ENCODE measurements at regions of chr5 and their contacts with region 1.

Region 1: GRCh38 chr5:119411935-119412602 is 40.2 kb upstream of the HSD17B4 start:
- DNase-seq: peak; percentile 78
- ATAC-seq: peak; percentile 89
- H3K4me3 ChIP-seq: peak overlapping the region; percentile 68
- H3K27ac ChIP-seq: peak overlapping the region; percentile 69
- H3K4me1 ChIP-seq: peaks cover 20% of the 10 kb centered on the region
- H3K27me3 ChIP-seq: no peaks in the 10 kb centered on the region
- CTCF ChIP-seq: peak; percentile 92

Region 2: GRCh38 chr5:119022017-119022745 is 389.9 kb before region 1 on chr5:
- CTCF ChIA-PET with region 1: interaction called, 12 read pairs
- POLR2A ChIA-PET with region 1: no interaction called
- intact Hi-C with region 1: loop called (anchors 1 kb)
- DNase-seq: peak; percentile 50
- ATAC-seq: peak; percentile 25; the same call in 1 of the 2 replicates
- H3K4me3 ChIP-seq: no peak overlapping the region
- H3K27ac ChIP-seq: no peak overlapping the region
- H3K4me1 ChIP-seq: peaks cover 16% of the 10 kb centered on the region
- H3K27me3 ChIP-seq: no peaks in the 10 kb centered on the region
- CTCF ChIP-seq: peak; percentile 67

Region 3: DNA sequence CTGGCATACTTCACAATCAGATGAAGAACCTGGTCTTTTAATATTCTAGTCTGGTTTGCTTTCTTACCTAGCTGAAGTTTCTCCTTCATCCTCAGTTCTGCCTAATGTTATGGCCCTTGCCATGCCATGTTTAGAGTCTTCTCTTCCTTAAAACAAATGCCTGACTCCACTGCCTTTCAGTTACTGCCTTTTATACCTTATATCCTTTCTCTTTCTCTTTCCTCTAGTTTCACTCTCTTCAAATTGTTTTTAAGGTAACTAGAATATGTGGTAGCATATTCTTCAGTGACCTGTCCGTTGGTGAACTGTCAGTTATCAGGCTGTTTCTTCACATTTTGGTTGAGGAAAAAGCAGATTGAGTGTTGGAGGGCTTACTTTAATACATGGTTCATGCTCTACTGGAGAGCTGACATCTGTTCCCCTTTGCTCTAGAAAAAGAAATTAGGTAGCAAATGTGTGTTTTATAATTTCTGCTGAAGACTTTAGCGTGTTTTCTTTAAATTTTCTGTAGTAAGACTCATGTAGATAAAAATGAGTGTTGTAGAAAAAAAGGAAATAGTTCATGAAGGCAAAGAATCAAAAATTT is 237.4 kb before region 1 on chr5:
- CTCF ChIA-PET with region 1: no interaction called
- POLR2A ChIA-PET with region 1: no interaction called
- intact Hi-C with region 1: loop called (anchors 5 kb)
- DNase-seq: no peak
- ATAC-seq: no peak
- H3K4me3 ChIP-seq: no peak overlapping the region
- H3K27ac ChIP-seq: no peak overlapping the region
- H3K4me1 ChIP-seq: peaks cover 5% of the 10 kb centered on the region; the same call in 1 of the 2 replicates
- H3K27me3 ChIP-seq: no peaks in the 10 kb centered on the region
- CTCF ChIP-seq: no peak

Region 4: GRCh38 chr5:119315516-119315949 is 96.5 kb before region 1 on chr5:
- CTCF ChIA-PET with region 1: interaction called, 6 read pairs
- POLR2A ChIA-PET with region 1: no interaction called
- intact Hi-C with region 1: loop called (anchors 2 kb)
- DNase-seq: peak; percentile 44
- ATAC-seq: peak; percentile 81
- H3K4me3 ChIP-seq: no peak overlapping the region
- H3K27ac ChIP-seq: no peak overlapping the region
- H3K4me1 ChIP-seq: no peaks in the 10 kb centered on the region
- H3K27me3 ChIP-seq: no peaks in the 10 kb centered on the region
- CTCF ChIP-seq: peak; percentile 56

Region 5: GRCh38 chr5:119355685-119356611 is 56.1 kb before region 1 on chr5 and contains the start of gene TNFAIP8:
- CTCF ChIA-PET with region 1: interaction called, 3 read pairs
- POLR2A ChIA-PET with region 1: no interaction called
- intact Hi-C with region 1: loop called (anchors 1 kb)
- DNase-seq: peak; percentile 69
- ATAC-seq: peak; percentile 79
- H3K4me3 ChIP-seq: peak within 1 kb of the TSS; percentile 94
- H3K27ac ChIP-seq: peak within 1 kb of the TSS; percentile 94
- H3K4me1 ChIP-seq: peaks cover 56% of the 10 kb centered on the region
- H3K27me3 ChIP-seq: no peaks in the 10 kb centered on the region
- CTCF ChIP-seq: no peak
- total RNA-seq, gene TNFAIP8: 11.8 and 20.0 TPM in 2 replicates